Tibial artery (tissue), 4 donors: ENCODE measurements at regions of chr6 and their contacts with region 1.

Region 1: GRCh38 chr6:29942275-29943052 is at the start of gene HLA-A:
- DNase-seq: peak; percentile 94 to 97
- H3K4me3 ChIP-seq: peak within 1 kb of the TSS; percentile 70 to 78
- H3K27ac ChIP-seq: peak within 1 kb of the TSS; percentile 89 to 93
- H3K4me1 ChIP-seq: peaks cover 0 to 6% (median 4%) of the 10 kb centered on the region in 4 donors
- H3K27me3 ChIP-seq: no peaks in the 10 kb centered on the region
- CTCF ChIP-seq: no peak

Region 2: DNA sequence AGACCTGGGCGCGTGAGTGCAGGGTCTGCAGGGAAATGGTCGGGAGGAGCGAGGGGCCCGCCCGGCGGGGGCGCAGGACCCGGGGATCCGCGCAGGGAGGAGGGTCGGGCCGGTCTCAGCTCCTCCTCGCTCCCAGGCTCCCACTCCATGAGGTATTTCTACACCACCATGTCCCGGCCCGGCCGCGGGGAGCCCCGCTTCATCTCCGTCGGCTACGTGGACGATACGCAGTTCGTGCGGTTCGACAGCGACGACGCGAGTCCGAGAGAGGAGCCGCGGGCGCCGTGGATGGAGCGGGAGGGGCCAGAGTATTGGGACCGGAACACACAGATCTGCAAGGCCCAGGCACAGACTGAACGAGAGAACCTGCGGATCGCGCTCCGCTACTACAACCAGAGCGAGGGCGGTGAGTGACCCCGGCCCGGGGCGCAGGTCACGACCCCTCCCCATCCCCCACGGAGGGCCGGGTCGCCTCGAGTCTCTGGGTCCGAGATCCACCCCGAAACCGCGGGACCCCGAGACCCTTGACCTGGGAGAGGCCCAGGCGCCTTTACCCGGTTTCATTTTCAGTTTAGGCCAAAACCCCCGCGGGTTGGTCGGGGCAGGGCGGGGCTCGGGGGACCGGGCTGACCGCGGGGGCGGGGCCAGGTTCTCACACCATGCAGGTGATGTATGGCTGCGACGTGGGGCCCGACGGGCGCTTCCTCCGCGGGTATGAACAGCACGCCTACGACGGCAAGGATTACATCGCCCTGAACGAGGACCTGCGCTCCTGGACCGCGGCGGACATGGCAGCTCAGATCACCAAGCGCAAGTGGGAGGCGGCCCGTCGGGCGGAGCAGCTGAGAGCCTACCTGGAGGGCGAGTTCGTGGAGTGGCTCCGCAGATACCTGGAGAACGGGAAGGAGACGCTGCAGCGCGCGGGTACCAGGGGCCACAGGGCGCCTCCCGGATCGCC is 54.4 kb before region 1 on chr6:
- intact Hi-C with region 1: loop called (anchors 5 kb)
- DNase-seq: peak; percentile 57 to 91
- H3K4me3 ChIP-seq: peak overlapping the region; percentile 60 to 75
- H3K27ac ChIP-seq: peak overlapping the region; percentile 83 to 97
- H3K4me1 ChIP-seq: peaks cover 0 to 7% (median 0%) of the 10 kb centered on the region in 4 donors
- H3K27me3 ChIP-seq: no peaks in the 10 kb centered on the region
- CTCF ChIP-seq: no peak

Region 3: GRCh38 chr6:30006170-30007131 is 64.0 kb after region 1 on chr6:
- intact Hi-C with region 1: no loop called
- DNase-seq: peak; percentile 64 to 79
- H3K4me3 ChIP-seq: peak overlapping the region; percentile 55 to 76
- H3K27ac ChIP-seq: peak overlapping the region; percentile 54 to 60
- H3K4me1 ChIP-seq: peaks cover 0 to 22% (median 7%) of the 10 kb centered on the region in 4 donors
- H3K27me3 ChIP-seq: peaks cover 0 to 26% of the 10 kb centered on the region in 2 donors
- CTCF ChIP-seq: no peak